Activated CD4-positive, alpha-beta T cell treated with anti-CD3 and anti-CD28 coated beads, Interleukin-2, amount 10 ng/mL, durations not matched to agents 24 days and 14 days (primary cell): ENCODE measurements at regions of chr1 and their contacts with region 1.

Region 1: GRCh38 chr1:15526490-15527339 is at the start of gene DNAJC16:
- DNase-seq: peak; percentile 99
- H3K4me3 Mint-ChIP-seq: peak within 1 kb of the TSS; percentile 99
- H3K27ac Mint-ChIP-seq: peak within 1 kb of the TSS; percentile 100
- H3K4me1 Mint-ChIP-seq: peaks cover 43% of the 10 kb centered on the region
- H3K27me3 Mint-ChIP-seq: no peaks in the 10 kb centered on the region
- total RNA-seq, gene DNAJC16: 15.4 and 16.3 TPM in 2 replicates

Region 2: DNA sequence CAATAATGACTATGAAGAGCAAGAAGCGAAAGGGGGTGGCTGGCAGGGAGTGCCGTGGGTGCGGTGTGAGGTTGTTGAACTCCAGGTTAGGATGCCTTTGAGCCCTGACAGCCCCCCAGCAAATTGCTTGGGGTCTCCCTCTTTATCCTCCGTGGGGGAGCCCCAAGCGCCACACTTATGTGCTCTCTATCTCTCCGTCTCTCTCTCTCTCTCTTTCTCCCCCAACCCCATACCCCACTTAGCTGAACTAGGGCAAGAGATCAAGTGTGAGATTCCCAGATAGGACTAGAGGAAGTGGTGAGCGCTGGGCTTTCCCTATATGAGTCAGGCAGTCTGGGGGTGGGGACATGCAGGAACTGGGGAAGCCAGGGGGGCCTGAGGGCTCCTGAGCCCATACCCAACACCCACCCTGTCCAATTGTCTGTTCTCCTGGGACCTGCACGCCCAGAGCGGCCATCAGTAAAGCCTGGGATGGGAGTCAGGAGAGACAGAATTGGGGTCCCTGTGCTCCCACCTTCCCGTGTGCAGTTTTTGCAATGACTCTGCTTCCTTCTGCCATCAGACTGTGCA is 109.3 kb before region 1 on chr1:
- intact Hi-C with region 1: loop called (anchors 2 kb)
- DNase-seq: peak; percentile 87
- H3K4me3 Mint-ChIP-seq: peak overlapping the region; percentile 70
- H3K27ac Mint-ChIP-seq: peak overlapping the region; percentile 73
- H3K4me1 Mint-ChIP-seq: peaks cover 60% of the 10 kb centered on the region
- H3K27me3 Mint-ChIP-seq: no peaks in the 10 kb centered on the region

Region 3: DNA sequence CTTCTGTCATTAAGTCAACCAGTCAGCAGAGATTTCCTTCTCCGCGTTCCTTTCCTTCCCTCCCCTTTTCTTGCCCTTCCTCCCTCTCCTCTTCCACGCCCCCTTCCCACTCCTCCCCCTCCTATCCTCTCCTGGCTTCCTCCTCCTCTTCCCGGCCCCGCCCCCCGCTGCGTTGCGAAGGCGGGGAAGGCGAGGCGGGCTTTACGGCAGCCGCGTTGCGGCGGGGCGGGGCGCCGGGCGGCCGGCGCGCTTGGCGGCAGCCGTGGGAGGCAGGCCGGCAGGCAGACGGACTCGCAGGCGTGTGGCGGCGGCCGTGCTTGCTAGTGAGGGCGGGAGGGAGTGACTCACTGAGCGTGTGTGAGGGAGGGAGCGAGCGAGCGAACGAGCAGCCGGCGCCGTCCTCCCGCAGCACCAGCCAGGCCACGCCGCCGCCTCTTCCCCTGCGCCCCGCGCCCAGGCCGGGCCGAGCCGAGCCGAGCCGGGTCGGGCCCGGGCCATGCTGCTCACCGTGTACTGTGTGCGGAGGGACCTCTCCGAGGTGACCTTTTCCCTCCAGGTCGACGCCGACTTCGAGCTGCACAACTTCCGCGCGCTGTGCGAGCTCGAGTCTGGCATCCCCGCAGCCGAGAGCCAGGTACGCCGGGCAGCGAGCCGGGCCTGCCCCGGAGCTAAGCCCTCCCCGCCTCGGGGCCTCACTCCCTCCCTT is 90.6 kb after region 1 on chr1 and contains the start of gene DDI2:
- intact Hi-C with region 1: loop called (anchors 1 kb)
- DNase-seq: peak; percentile 99
- H3K4me3 Mint-ChIP-seq: peak within 1 kb of the TSS; percentile 90
- H3K27ac Mint-ChIP-seq: peak within 1 kb of the TSS; percentile 94
- H3K4me1 Mint-ChIP-seq: peaks cover 32% of the 10 kb centered on the region
- H3K27me3 Mint-ChIP-seq: no peaks in the 10 kb centered on the region
- total RNA-seq, gene DDI2: 50.5 and 53.0 TPM in 2 replicates

Region 4: DNA sequence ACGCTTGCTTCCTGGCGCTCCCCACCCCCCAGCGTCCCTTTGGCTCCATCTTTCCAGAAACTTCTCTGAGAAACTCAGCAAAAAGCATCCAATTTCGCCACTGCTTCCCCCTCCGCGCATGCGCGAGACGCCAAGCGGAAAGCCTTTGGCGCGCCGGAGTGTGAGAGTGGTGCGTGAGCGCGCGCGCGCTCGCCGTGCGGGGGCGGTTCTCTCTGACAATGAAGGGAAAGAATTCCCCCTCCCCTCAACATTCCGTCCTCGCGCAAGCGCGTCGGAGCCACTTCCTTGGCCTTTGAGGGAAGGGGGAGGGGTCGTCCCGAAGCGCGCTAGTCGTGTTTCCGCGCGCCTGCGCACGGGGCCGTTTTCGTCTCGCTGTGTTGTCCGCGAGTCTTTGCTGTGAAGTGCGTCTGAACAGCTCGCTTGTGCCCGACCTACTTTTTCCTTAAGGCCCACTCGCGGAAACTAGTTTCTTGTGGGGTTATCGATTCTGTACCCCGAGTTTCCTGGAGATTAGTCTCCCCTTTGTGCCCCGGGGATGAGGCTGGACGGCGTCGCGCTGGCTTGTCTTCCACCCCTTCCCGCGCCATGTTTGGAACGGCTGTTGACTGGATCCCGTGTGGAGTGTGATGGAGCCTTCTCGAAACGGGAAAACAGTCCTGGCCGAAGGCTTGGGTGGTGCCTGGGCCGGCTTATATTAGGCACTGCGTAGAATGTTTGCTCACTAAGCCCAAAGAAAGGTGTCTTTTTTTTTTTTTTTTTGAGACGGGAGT is 309.2 kb after region 1 on chr1:
- intact Hi-C with region 1: loop called (anchors 2 kb)
- DNase-seq: peak; percentile 100
- H3K4me3 Mint-ChIP-seq: peak overlapping the region; percentile 95
- H3K27ac Mint-ChIP-seq: peak overlapping the region; percentile 99
- H3K4me1 Mint-ChIP-seq: peaks cover 29% of the 10 kb centered on the region
- H3K27me3 Mint-ChIP-seq: peaks cover 2% of the 10 kb centered on the region